Activated naive CD8-positive, alpha-beta T cell treated with anti-CD3 and anti-CD28 coated beads, Interleukin-2, amount 10 ng/mL, durations not matched to agents 7 days and 5 days (primary cell): ENCODE measurements at regions of chr20 and their contacts with region 1.

Region 1: GRCh38 chr20:1325173-1326030 is 3.5 kb downstream of the SDCBP2 start:
- DNase-seq: peak; percentile 99
- ATAC-seq: peak; percentile 90
- H3K4me3 Mint-ChIP-seq: no peak overlapping the region
- H3K27ac Mint-ChIP-seq: no peak overlapping the region
- H3K4me1 Mint-ChIP-seq: peaks cover 27% of the 10 kb centered on the region
- H3K27me3 Mint-ChIP-seq: no peaks in the 10 kb centered on the region

Region 2: GRCh38 chr20:1274485-1275311 is 50.7 kb before region 1 on chr20:
- POLR2A ChIA-PET with region 1: no interaction called
- DNase-seq: no peak
- ATAC-seq: no peak
- H3K4me3 Mint-ChIP-seq: no peak overlapping the region
- H3K27ac Mint-ChIP-seq: no peak overlapping the region
- H3K4me1 Mint-ChIP-seq: peaks cover 2% of the 10 kb centered on the region
- H3K27me3 Mint-ChIP-seq: no peaks in the 10 kb centered on the region

Region 3: DNA sequence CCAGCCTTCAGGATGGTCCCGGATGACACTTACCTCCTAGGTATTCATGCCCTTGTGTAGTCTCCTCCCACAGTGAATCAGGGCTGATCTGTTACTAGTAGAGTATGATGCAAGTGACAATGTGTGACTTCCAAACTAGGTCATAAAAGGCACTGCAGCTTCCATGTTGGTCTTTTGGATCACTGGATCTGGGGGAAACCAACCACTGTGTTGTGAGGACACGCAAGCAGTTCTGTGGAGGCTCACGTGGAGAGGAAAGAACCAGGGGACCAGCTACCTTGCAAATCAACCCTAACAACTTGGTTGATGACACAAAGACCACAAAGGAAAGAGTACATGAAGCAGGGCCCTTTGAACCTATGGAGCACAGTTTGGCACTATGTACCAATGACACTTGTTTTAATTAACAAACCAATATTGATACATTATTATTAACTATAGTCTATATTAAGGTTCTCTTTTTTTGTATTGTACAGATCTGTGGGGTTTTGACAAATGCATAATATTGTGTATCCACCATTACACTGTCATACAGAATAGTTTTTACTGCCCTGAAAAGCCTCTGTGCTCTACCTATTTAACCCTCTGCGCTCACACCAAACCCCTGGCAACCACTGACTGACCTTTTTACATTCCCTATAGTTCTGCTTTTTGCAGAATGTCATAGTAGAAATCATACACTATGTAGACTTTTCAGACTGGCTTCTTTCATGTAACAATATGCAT is 19.8 kb after region 1 on chr20:
- POLR2A ChIA-PET with region 1: interaction called, 13 read pairs
- DNase-seq: no peak
- ATAC-seq: peak; percentile 73
- H3K4me3 Mint-ChIP-seq: peak overlapping the region; percentile 50
- H3K27ac Mint-ChIP-seq: peak overlapping the region; percentile 87
- H3K4me1 Mint-ChIP-seq: peaks cover 35% of the 10 kb centered on the region
- H3K27me3 Mint-ChIP-seq: no peaks in the 10 kb centered on the region

Region 4: GRCh38 chr20:1392823-1393506 is 67.6 kb after region 1 on chr20 and contains the start of gene FKBP1A:
- POLR2A ChIA-PET with region 1: interaction called, 78 read pairs
- DNase-seq: peak; percentile 91
- ATAC-seq: peak; percentile 81
- H3K4me3 Mint-ChIP-seq: peak within 1 kb of the TSS; percentile 92
- H3K27ac Mint-ChIP-seq: peak within 1 kb of the TSS; percentile 86
- H3K4me1 Mint-ChIP-seq: peaks cover 48% of the 10 kb centered on the region
- H3K27me3 Mint-ChIP-seq: peaks cover 17% of the 10 kb centered on the region
- total RNA-seq, gene FKBP1A: 231 to 234 TPM